Natural killer cell (primary cell): ENCODE measurements at regions of chr1 and their contacts with region 1.

Region 1: DNA sequence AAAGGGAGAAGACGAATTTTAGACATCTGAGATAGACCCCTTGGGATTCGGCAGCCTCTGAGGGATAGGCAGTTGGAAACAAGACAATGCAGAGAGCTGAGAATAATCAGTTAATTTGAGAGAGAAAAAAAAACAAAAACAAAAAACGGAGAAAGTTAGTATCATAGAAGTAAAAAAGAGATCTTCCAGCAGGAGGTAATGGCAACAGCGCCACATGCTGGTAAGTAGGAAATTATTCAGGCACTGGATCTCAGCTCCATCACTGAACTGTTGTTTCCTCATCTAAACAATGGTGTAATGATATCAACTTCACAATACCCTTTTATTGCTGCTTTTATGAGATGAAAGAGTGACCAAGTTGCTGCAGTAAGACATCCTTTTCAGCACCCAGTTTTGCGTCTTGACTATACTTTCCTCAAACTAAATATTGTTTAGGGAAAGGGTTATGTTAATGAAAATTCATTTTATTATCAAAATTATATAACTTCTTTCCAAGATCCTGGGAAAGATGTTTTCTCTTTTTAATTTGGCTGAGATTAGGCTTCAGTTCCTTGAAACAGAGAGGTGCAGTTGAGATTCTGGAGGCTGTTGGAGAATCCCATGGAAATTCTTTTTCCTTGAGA is 91.4 kb upstream of the KCNA3 start:
- DNase-seq: peak in 1 of 2 donors; percentile 90
- ATAC-seq: peak; percentile 67 to 76 (median 75)
- H3K4me3 ChIP-seq: no peak overlapping the region
- H3K4me3 Mint-ChIP-seq: no peak overlapping the region
- H3K27ac ChIP-seq: no peak overlapping the region
- H3K27ac Mint-ChIP-seq: no peak overlapping the region
- H3K4me1 ChIP-seq: peaks cover 3% of the 10 kb centered on the region
- H3K4me1 Mint-ChIP-seq: peaks cover 4 to 5% of the 10 kb centered on the region in 2 donors
- H3K27me3 ChIP-seq: peaks cover 3% of the 10 kb centered on the region
- H3K27me3 Mint-ChIP-seq: peaks cover 30 to 84% of the 10 kb centered on the region in 2 donors
- CTCF ChIP-seq: peak; percentile 92

Region 2: DNA sequence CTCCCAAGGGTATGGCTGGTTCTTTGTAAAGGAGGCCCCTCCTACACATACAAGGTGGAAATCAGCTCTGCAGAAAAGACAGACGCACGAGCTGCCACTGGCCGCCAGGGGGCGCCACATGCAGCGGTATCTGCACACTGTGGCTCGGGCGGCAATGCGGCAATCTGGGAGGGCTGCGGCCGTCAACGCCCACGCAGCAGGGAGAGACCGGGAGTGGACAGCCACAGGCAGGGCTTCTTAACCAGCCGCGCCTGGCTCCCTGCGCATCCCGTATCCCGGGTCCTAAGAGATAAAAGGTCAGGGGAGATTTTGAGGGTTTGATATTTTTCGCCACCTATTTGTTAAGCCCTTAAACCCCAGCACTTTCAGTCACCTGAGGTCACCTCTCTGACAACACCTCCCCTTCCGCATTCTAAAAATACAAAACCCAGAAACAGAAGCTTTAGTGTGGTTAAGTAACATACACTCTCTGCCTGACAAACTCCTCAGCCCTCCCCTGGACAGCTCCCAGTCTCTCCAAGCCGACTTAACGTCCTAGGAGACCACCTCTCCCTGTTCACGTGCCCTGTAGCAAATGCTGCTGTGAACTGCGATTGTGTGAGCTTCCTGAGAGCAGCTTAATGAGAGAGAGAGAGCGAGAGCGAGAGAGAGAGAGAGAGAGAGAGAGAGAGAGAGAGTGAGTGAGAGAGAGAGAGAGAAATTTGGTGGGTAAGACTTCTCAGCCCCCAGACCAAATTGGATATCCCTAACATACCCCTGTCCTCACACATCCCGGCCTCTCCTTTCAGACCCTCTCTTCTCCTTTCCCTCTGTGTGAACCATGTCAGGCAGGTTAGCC is 146.5 kb before region 1 on chr1:
- intact Hi-C with region 1: loop called (anchors 1 kb)
- DNase-seq: peak; percentile 87 to 95
- ATAC-seq: peak; percentile 83 to 88 (median 86)
- H3K4me3 ChIP-seq: peak overlapping the region; percentile 55
- H3K4me3 Mint-ChIP-seq: peak overlapping the region; percentile 82
- H3K27ac ChIP-seq: peak overlapping the region; percentile 54
- H3K27ac Mint-ChIP-seq: peak overlapping the region; percentile 69 to 83
- H3K4me1 ChIP-seq: peaks cover 32% of the 10 kb centered on the region
- H3K4me1 Mint-ChIP-seq: peaks cover 22 to 27% of the 10 kb centered on the region in 2 donors
- H3K27me3 ChIP-seq: peaks cover 5% of the 10 kb centered on the region
- H3K27me3 Mint-ChIP-seq: peaks cover 28 to 33% of the 10 kb centered on the region in 2 donors
- CTCF ChIP-seq: peak; percentile 97

Region 3: GRCh38 chr1:110630839-110631663 is 135.1 kb before region 1 on chr1:
- intact Hi-C with region 1: loop called (anchors 1 kb)
- DNase-seq: peak; percentile 75 to 94
- ATAC-seq: peak; percentile 86 to 96 (median 95)
- H3K4me3 ChIP-seq: no peak overlapping the region
- H3K4me3 Mint-ChIP-seq: no peak overlapping the region
- H3K27ac ChIP-seq: peak overlapping the region; percentile 19
- H3K27ac Mint-ChIP-seq: no peak overlapping the region
- H3K4me1 ChIP-seq: peaks cover 52% of the 10 kb centered on the region
- H3K4me1 Mint-ChIP-seq: peaks cover 16 to 21% of the 10 kb centered on the region in 2 donors
- H3K27me3 ChIP-seq: no peaks in the 10 kb centered on the region
- H3K27me3 Mint-ChIP-seq: peaks cover 0 to 3% of the 10 kb centered on the region in 2 donors
- CTCF ChIP-seq: peak; percentile 86

Region 4: DNA sequence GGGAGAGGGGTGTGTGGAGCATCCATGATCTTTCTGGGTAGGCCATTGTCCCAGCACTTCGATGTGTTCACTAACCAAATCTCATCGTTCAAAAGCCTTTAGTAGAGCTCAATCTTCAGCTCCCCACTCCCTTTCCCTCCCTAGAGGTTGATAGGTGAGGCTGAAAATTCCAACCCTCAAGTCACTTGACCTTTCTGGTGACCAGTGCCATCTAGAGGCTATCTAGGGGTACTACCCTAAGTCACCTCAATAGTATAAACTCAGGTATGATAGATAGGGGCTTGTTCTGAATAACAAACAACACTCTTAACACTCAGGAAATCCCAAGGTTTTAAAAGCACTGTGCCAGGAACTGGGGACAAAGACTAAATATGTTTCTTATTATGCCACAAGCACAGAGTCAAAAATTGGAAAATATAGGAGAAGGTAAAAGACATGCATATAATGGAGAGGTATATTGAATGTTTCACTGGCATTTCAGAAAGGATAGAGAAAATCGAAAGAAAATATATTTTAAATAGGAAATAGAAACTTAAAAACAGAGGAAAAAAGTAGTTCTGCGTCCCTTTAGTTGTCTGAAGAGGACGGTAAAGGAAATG is 63.9 kb after region 1 on chr1:
- intact Hi-C with region 1: no loop called
- DNase-seq: peak in 1 of 2 donors; percentile 74
- ATAC-seq: peak; percentile 73 to 86 (median 75)
- H3K4me3 ChIP-seq: no peak overlapping the region
- H3K4me3 Mint-ChIP-seq: no peak overlapping the region
- H3K27ac ChIP-seq: no peak overlapping the region
- H3K27ac Mint-ChIP-seq: no peak overlapping the region
- H3K4me1 ChIP-seq: no peaks in the 10 kb centered on the region
- H3K4me1 Mint-ChIP-seq: peaks cover 6 to 7% of the 10 kb centered on the region in 2 donors
- H3K27me3 ChIP-seq: no peaks in the 10 kb centered on the region
- H3K27me3 Mint-ChIP-seq: peaks cover 22 to 45% of the 10 kb centered on the region in 2 donors
- CTCF ChIP-seq: peak; percentile 89